GM12878 (cell line): ENCODE measurements at regions of chr5 and their contacts with region 1.

Region 1: GRCh38 chr5:154513669-154514084 is 35.6 kb upstream of the HAND1 start:
- DNase-seq: peak; percentile 61
- ATAC-seq: peak; percentile 77
- H3K4me3 ChIP-seq: peak overlapping the region; percentile 34; the same call in 1 of the 2 replicates
- H3K27ac ChIP-seq: peak overlapping the region; percentile 39
- H3K4me1 ChIP-seq: peaks cover 48% of the 10 kb centered on the region
- H3K27me3 ChIP-seq: no peaks in the 10 kb centered on the region
- CTCF ChIP-seq: no peak
- EP300 ChIP-seq: peak; percentile 86; a peak in 3 of 4 replicates
- POLR2A ChIP-seq: no peak
- RAD21 ChIP-seq: no peak

Region 2: GRCh38 chr5:154498591-154498990 is 15.1 kb before region 1 on chr5:
- CTCF ChIA-PET with region 1: interaction called, 36 read pairs
- POLR2A ChIA-PET with region 1: interaction called, 35 read pairs
- RAD21 ChIA-PET with region 1: interaction called, 62 read pairs
- SMC1A ChIA-PET with region 1: interaction called, 108 read pairs
- in situ Hi-C with region 1: no loop called
- intact Hi-C with region 1: loop called (anchors 1 kb)
- DNase-seq: no peak
- ATAC-seq: no peak
- H3K4me3 ChIP-seq: no peak overlapping the region
- H3K27ac ChIP-seq: no peak overlapping the region
- H3K4me1 ChIP-seq: peaks cover 29% of the 10 kb centered on the region
- H3K27me3 ChIP-seq: no peaks in the 10 kb centered on the region
- CTCF ChIP-seq: no peak
- EP300 ChIP-seq: no peak
- POLR2A ChIP-seq: no peak
- RAD21 ChIP-seq: no peak

Region 3: DNA sequence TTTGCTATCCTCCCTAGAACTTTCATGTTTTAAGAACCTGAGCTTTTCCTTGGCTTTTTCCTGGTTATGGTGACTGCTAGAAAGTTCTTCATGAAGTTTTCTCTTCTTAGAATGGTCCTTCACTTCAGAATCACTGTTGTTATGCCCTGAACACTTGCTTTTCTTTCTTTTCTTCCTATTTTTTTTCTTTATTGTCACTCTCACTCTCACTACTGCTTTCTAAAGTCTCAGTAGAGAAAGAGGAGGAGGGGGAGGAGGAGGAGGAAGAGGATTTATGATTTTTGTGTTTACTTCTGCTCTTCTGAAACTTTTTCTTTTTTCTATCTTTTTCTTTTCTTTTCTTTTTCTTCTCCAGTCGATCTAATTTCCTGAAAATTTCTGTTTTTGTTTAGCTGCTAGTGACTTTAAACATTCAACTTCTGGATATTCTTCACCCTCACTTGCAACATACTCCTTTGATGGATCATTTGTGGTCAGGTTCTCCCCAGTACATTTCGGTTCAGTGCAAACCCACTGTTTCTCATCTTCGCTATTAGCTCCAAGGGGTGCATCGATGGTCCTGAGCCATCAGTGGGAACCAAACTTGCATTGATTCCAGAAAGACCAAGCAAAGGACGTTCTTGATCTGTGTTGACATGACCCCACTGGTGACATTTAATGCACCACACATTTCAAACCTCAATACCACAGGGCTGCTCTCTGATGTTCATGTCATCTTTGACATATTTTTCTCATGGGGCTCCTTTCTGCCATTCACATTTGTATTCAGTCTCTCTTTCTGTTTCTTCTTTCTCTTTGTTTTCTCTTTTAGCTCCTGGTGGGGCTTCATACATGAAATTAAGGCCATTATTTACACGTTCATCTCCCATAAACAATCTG is 46.0 kb after region 1 on chr5:
- CTCF ChIA-PET with region 1: no interaction called
- POLR2A ChIA-PET with region 1: no interaction called
- RAD21 ChIA-PET with region 1: no interaction called
- SMC1A ChIA-PET with region 1: no interaction called
- in situ Hi-C with region 1: no loop called
- intact Hi-C with region 1: loop called (anchors 5 kb)
- DNase-seq: peak; percentile 12
- ATAC-seq: peak; percentile 85
- H3K4me3 ChIP-seq: 0 out of 2 replicates have a peak overlapping the region, but pooled peaks have one; percentile 10
- H3K27ac ChIP-seq: peak overlapping the region; percentile 24; the same call in 1 of the 2 replicates
- H3K4me1 ChIP-seq: peaks cover 12% of the 10 kb centered on the region
- H3K27me3 ChIP-seq: no peaks in the 10 kb centered on the region
- CTCF ChIP-seq: no peak
- EP300 ChIP-seq: no peak
- POLR2A ChIP-seq: no peak
- RAD21 ChIP-seq: no peak

Region 4: DNA sequence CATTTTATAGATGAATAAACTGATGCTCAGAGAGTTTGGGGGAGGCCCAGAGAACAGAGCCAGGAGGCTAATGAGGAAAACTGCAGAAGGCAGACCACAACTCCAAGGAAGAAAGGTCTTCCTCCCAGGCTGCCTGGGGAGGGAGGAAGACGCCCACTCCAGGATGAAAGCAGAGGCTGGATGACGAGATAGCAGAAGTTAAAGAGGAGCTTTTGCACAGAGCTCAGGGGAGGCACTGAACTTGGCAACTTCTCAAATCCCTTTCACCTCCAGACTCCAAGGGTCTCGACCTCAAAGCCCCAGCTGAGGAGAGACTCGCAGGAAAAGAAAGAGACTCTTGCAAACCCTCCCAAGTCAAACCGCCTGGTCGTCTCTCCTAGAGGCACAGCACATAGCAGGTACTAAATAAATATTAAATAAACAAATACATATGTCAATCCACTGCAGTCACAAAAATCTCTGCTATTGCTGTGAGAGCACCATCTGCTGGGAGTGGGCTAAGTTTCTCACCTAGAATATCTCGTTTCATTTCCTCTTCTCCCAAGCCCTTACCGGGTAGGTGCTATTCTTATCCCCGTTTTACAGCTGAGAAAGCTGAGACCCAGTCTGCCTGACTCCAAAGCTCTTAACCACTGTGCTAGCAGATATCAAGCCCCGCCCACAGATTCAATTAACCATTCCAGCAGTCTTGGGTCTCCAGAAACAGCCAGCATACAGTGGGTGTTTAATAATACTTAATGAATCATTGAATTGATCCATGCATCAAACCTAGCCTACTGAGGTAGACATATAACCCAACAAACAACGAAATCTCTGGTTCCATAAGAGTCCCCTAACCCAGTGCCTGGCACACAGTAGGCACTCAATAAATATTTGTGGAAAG is 62.1 kb after region 1 on chr5:
- CTCF ChIA-PET with region 1: interaction called, 79 read pairs
- POLR2A ChIA-PET with region 1: no interaction called
- RAD21 ChIA-PET with region 1: interaction called, 6 read pairs
- SMC1A ChIA-PET with region 1: interaction called, 19 read pairs
- in situ Hi-C with region 1: no loop called
- intact Hi-C with region 1: no loop called
- DNase-seq: peak; percentile 66
- ATAC-seq: peak; percentile 97
- H3K4me3 ChIP-seq: no peak overlapping the region
- H3K27ac ChIP-seq: no peak overlapping the region
- H3K4me1 ChIP-seq: peaks cover 16% of the 10 kb centered on the region
- H3K27me3 ChIP-seq: no peaks in the 10 kb centered on the region
- CTCF ChIP-seq: peak; percentile 60 to 67 (median 64)
- EP300 ChIP-seq: no peak
- POLR2A ChIP-seq: no peak
- RAD21 ChIP-seq: peak; percentile 74